MCF 10A (cell line): ENCODE measurements at regions of chr16 and their contacts with region 1.

Region 1: GRCh38 chr16:48901712-48902374 is 291.9 kb upstream of the N4BP1 start:
- DNase-seq: no peak
- H3K4me3 Mint-ChIP-seq: no peak overlapping the region
- H3K27ac Mint-ChIP-seq: no peak overlapping the region
- H3K4me1 Mint-ChIP-seq: no peaks in the 10 kb centered on the region
- H3K27me3 Mint-ChIP-seq: peaks cover 67% of the 10 kb centered on the region
- CTCF ChIP-seq: peak; percentile 14

Region 2: DNA sequence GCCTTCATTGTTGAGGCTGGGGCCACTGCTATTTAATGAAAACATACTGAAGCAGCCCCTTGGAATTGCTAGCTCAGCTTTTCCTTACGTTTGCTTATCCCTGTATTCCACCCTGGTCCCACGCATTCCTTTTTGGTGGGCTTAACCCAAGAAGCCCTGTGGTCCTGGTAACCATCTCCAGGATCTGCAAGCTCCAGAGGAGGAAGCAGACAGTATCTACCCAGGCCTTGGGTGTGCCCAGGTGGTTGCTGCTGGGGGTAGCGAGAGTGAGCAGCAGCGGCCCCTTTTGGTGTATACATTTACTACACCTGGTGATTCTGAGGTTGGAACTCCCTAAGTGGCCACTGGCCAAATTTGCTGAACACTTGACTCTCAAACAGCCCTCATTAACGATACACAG is 282.1 kb after region 1 on chr16:
- CTCF ChIA-PET with region 1: no interaction called
- POLR2A ChIA-PET with region 1: no interaction called
- intact Hi-C with region 1: loop called (anchors 10 kb)
- DNase-seq: peak; percentile 47
- H3K4me3 Mint-ChIP-seq: no peak overlapping the region
- H3K27ac Mint-ChIP-seq: no peak overlapping the region
- H3K4me1 Mint-ChIP-seq: no peaks in the 10 kb centered on the region
- H3K27me3 Mint-ChIP-seq: no peaks in the 10 kb centered on the region
- CTCF ChIP-seq: peak; percentile 46